ENCODE measurements at regions of chr3 and their contacts with region 1.

Region 1: DNA sequence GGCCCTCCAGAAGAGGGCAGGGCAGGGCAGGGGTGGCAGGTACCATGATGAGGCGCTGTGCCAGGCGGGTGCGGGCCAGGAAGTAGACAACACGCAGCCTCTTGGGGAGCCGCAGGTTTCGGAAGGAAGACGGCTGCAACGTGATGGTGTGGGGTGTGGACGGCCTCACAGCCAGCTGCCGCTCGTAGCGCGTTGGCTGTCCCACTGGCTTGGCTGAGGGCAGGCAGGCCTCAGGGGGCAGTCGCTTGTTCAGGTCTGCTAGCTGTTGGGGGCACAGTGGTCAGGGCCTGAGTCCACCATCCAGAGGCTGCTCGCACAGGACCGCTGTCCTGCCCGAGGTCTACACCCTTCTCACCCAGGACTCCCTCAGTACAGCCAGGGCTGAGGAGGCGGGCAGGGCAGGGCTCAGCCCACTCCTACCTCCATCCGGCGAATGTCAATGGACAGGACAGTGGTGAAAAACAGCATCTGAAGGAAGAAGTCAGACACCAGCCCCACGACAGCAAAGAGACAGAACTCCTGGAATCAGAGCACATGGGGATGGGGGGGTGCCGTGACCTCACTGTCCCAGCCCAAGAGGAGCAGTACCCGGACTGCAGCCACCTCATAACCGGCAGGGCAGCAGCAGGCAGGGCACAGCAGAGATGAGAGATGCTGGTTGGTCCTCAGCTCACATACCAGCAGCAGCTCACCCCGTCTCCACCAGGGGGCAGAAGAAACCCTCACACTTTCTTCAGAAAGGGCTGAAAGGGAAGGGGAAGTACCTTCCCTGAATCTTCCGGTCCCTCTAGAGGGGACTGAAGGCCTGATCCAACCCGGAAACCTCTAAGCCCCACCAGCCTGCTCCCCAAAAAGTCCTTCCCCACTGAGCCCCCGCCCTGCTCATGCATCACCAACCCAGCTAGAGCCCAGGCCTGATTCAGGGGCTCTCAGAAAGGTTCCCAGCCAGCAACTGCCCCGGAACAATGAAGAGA is 40.0 kb downstream of the PTPN23 start:
- DNase-seq: peak; percentile 94
- CTCF ChIP-seq: peak; percentile 89

Region 2: DNA sequence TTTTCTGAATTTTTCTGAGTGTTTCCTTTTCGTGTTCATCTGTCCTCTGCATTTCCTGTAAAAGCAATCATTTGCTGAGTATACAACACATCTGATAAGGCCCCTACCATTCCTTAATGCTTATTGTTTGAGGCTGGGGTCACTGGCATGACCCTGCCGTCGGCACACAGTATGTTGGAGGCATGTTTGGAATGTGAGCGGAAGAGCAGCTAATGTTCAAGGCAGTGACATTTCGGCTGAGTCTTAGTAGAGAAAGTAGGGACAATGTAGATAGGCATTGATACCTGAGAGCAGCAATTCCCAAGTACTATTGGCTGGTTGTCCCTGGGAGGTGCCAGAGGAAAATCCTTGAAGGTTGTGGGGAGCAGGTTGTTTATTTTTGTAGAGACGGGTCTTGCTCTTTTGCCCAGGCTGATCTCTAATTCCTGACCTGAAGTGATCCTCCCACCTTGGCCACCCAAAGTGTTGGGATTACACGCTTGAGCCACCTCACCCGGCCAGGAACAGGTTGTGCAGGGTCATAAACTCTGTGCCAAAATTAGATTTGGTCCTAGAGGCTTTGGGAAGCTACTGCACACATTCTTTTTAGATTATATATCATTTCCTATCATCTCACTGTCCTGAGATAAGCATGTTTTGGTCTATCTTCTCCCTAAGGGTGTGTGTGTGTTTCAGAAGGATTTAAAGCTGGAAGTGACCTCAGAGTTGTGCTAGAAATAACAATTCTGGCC is 26.5 kb before region 1 on chr3:
- CTCF ChIA-PET with region 1: interaction called, 23 read pairs
- POLR2A ChIA-PET with region 1: no interaction called
- DNase-seq: no peak
- CTCF ChIP-seq: no peak

Region 3: DNA sequence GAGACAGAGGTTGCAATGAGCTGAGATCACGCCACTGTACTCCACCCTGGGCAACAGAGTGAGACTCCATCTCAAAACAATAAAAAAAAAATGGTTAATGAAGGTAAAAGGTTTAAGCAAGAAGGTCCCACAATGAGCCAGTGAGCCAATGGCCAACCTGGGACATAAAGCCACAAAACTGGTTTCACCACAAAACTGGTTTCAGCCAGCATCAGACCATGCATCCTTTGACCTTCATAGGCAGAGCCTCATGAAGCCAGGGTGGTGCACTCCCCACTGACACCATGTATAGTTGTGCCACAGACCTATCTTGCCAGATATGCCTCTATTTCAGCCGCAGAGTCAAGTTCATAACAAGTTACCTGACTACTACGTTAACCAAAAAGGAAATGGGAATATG is 13.0 kb after region 1 on chr3:
- CTCF ChIA-PET with region 1: interaction called, 23 read pairs
- POLR2A ChIA-PET with region 1: no interaction called
- DNase-seq: no peak
- CTCF ChIP-seq: no peak

Region 4: DNA sequence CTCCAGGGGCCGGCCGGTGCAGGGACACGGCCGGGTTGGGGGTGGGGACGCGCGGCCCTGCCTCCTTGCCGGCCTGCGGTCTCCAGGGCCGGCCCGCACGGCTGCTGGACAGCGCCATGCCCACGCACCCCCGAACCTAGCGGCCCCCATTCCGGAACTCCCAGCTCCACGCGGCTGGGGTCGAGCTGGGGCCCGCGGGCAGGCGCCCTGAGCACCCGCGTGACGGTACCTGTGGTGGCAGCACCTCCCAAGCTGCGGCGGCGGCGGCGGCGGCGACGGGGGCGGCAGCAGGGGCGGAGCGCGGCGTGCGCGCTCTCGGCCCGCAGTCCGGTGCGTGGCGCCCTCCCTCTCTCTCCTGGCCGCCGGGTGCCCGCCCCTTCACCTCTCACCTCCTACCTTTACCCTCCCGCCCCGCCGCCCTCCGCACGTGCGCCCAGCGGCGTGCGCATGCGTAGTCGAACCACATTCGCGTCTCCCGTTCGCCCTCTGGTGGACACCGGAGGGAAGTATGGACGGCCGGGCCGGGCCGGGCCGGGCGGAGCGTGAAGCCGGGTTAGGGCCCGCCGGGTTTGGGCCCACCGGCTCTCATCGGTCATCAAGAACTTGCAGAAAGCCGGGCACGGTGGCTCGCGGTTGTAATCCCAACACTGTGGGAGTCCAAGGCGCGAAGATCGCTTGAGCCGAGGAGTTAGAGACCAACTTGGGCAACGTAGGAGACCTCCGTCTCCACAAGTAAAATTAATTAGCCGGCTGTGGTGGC is 55.0 kb after region 1 on chr3 and contains the start of gene SCAP:
- CTCF ChIA-PET with region 1: interaction called, 77 read pairs
- POLR2A ChIA-PET with region 1: no interaction called
- DNase-seq: peak; percentile 97
- CTCF ChIP-seq: peak; percentile 95

Region 5: GRCh38 chr3:47513125-47513929 is 92.5 kb after region 1 on chr3 and contains the start of gene ELP6:
- CTCF ChIA-PET with region 1: interaction called, 19 read pairs
- POLR2A ChIA-PET with region 1: no interaction called
- DNase-seq: peak; percentile 97
- CTCF ChIP-seq: peak; percentile 77

Region 6: DNA sequence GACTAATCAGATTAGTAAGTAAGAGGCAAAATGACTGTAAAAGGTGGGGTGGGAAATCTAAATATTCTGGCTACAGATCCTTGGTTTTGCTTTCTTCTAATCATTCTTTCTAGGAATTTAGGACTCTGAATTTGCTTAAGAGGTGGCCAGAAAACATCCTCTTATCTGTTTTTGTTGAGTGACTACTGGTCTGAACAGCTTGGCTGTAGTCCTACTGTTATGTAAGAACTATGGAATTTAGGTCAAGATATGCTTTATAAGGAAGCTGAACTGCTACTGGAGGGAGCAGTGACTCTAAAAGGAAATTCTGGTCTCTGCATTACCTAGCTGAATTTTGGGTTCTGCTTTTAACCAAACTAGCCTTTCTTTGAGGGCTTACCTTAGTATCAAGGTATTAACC is 191.4 kb after region 1 on chr3:
- CTCF ChIA-PET with region 1: no interaction called
- POLR2A ChIA-PET with region 1: no interaction called
- DNase-seq: no peak
- CTCF ChIP-seq: no peak